HAP-1 (cell line): ENCODE measurements at regions of chr19 and their contacts with region 1.

Region 1: DNA sequence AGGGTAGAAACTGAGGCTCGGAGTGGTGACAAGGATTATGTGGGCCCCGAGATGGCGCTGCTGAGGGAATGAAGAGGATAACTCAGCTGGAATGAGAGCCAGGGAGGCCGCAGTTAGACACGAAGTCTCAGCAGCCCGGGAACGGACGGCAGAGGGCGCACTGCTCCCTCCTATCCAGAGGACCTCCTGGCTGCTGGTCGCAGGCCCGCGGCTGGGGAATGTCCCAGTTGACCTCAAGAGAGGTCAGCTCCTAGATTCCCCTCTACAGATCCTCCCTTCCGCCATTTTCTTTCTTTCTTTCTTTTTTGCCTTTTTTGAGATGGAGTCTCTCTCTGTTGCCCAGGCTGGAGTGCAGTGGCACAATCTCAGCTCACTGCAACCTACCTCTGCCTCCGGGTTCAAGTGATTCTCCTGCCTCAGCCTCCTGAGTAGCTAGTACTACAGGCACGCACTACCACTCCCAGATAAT is 24.1 kb upstream of the ASPDH start:
- DNase-seq: peak; percentile 71 to 94
- H3K4me3 ChIP-seq: no peak overlapping the region
- H3K4me1 ChIP-seq: no peaks in the 10 kb centered on the region
- H3K27me3 ChIP-seq: no peaks in the 10 kb centered on the region

Region 2: DNA sequence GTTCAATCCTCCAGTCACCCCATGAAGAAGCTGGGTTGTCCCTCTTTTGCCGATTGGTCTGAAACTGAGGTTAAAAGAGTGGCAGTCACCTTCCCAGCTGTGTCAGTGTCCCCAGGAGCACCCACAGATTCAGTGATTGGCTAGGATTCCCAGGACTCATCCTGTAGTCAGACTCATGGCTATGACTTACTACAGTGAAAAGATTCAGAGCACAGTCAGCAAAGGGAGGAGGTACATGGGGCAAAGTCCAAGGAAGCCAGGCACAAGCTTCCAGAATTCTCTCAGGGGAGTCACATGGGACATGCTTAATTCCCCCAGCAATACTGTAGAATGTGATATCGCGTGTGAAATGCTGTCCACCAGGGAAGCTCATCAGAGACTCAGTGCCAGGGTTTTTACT is 497.8 kb before region 1 on chr19:
- in situ Hi-C with region 1: no loop called
- DNase-seq: no peak
- H3K4me3 ChIP-seq: no peak overlapping the region
- H3K4me1 ChIP-seq: no peaks in the 10 kb centered on the region
- H3K27me3 ChIP-seq: no peaks in the 10 kb centered on the region

Region 3: GRCh38 chr19:50639121-50640112 is 101.6 kb after region 1 on chr19 and contains the start of gene SYT3:
- in situ Hi-C with region 1: no loop called
- DNase-seq: peak; percentile 64 to 78
- H3K4me3 ChIP-seq: peak within 1 kb of the TSS; percentile 46
- H3K4me1 ChIP-seq: no peaks in the 10 kb centered on the region
- H3K27me3 ChIP-seq: peaks cover 13% of the 10 kb centered on the region

Region 4: DNA sequence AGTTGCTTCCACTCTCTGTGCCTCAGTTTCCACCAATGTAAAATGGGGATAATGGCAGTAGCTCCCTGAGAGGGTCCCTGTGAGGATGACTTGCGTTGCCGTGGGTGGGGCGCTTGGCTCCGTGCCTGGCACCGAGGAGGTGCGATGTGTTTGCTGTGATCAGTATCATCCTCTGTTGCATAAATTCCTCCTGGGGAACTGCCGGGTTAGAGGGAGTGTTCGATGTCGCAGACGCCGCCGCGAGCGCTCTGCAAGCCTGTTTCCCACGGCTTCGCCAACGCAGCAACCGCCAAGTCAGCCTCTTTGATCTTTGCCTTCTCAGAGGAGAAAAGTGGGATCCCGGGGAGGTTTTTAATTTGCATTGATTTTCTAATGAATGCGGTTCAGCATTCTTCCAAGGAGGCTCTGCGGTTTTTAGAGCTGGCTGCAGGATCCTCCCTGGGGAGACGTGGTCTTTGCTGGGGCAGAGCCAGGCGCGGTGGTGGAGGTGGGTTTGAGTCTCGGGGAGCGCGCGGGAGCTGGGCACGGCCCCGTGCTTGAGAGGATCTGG is 240.0 kb after region 1 on chr19:
- in situ Hi-C with region 1: loop called (anchors 5 kb)
- DNase-seq: peak; percentile 39 to 54
- H3K4me3 ChIP-seq: no peak overlapping the region
- H3K4me1 ChIP-seq: no peaks in the 10 kb centered on the region; the same call in 1 of the 2 replicates
- H3K27me3 ChIP-seq: peaks cover 39% of the 10 kb centered on the region

Region 5: DNA sequence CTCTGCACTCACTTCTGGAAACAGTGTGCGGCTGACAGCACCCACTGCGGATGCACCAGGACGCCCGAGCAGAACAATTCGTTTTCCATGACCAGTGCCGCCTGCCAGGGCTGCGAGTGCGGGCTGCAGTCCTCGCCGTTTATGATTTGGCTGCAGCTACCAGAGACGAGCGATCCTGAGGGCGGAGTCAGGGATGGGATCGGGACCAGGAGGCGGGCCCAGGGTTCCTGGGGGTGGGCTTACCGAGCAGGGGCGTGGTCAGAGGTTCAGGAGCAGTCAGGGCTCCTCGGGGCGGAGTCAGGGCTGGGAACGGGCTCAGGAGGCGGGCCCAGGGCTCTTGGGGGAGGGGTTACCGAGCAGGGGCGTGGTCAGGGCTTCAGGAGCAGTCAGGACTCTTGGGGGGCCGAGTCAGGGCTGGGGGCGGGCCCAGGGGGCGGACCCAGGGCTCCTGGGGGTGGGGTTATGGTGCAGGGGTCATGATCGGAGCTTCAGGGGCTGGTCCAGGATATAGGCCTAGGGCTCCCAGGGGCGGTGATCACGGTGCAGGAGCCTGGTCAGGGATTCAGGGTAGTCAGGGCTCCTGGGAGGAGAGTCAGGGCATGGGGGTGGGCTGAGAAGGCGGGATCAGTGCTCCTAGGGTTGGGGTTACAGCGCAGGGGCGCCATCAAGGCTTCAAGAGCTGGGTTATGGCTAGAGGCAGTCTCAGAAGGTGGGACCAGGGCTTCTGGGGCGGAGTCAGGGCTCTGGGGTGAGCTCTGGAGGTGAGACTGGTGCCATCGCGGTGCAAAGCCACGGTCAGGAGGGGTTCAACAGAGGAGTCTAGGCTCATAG is 371.7 kb after region 1 on chr19:
- in situ Hi-C with region 1: loop called (anchors 10 kb)
- DNase-seq: peak; percentile 46 to 94
- H3K4me3 ChIP-seq: peak overlapping the region; percentile 14; the same call in 1 of the 2 replicates
- H3K4me1 ChIP-seq: no peaks in the 10 kb centered on the region
- H3K27me3 ChIP-seq: peaks cover 22% of the 10 kb centered on the region

Region 6: DNA sequence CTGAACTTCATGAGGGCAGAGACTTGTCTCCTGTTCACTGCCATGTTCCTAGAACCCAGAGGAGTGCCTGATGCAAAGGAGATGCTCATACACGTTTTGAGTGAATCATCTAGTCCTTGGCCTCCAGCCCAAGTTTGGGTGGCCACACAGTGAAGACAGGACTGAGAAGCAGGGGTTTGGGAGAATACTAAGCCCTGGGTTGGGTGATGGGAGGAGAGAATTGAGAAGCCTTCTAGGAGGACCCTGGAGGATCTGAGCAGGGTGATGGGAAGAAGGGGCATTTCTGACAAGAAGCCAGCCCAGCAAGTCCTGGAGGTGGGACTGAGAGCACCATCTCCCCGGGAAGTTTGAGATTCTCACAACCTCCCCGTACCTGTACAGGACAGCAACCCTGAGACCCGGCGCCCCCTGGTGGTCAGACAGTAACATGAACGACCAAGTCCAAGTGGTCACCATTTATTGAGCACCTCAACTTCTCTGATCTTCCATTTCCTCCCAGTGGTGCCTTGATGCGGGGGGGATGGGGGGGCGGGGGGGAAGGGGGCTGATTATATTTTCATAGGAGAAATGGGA is 559.5 kb after region 1 on chr19:
- in situ Hi-C with region 1: no loop called
- DNase-seq: peak; percentile 48 to 85
- H3K4me3 ChIP-seq: no peak overlapping the region
- H3K4me1 ChIP-seq: no peaks in the 10 kb centered on the region
- H3K27me3 ChIP-seq: no peaks in the 10 kb centered on the region